ENCODE measurements at regions of chr6 and their contacts with region 1.

Region 1: GRCh38 chr6:99746261-99746895 is 139.7 kb downstream of the PRDM13 start:
- DNase-seq: peak; percentile 70
- H3K4me3 Mint-ChIP-seq: no peak overlapping the region
- H3K27ac Mint-ChIP-seq: no peak overlapping the region
- H3K4me1 Mint-ChIP-seq: no peaks in the 10 kb centered on the region
- H3K27me3 Mint-ChIP-seq: peaks cover 9% of the 10 kb centered on the region
- CTCF ChIP-seq: peak; percentile 72

Region 2: DNA sequence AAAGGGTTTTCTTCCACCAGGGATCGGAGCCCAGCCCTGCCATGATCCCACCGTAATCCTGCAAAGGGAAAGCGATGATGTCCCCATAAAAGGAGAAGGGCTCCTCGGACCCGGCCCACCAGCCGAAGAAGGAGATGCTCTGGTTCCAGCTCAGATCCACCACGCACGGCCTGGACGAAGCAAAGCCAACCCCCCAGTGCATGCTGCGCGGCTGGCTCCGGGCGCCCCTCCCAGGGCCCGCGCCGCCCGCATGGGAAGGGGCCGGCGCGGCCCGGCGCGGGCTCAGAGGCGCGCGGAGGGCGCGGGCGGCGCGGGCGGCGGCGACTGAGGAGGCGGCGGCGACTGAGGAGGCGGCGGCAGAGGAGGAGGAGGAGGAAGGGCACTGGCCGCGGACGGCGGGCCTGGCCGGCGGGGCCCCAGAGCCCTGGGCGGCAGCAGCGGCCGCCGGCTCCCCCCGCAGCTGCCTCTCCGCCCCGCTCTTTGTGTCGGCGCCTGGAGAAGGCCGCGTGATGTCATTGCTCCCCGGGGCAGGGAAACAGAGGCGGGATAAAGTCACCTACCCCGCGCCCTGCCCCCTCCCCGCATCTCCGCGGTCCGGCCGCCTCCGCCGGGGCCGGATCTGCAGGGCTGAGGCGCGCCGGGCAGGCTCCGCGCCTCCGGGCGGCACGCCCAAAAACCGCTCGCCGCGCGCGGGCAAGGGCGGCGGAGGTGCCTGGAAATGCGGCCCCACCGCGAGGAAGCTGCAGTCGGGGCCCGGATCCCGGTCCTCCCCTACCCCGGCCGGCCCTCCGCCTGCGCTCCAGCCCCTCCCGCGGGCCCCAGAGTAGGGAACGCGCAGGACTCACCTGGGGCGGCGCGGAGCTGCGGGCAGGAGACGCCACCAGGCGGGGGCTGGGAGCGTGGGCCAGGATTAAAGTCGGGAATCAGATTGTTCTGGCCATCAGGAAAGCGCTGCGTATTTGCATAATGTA is 396.9 kb before region 1 on chr6 and contains the start of gene FAXC:
- CTCF ChIA-PET with region 1: no interaction called
- intact Hi-C with region 1: loop called (anchors 10 kb)
- DNase-seq: peak; percentile 74
- H3K4me3 Mint-ChIP-seq: peak within 1 kb of the TSS; percentile 63
- H3K27ac Mint-ChIP-seq: no peak within 1 kb of the TSS
- H3K4me1 Mint-ChIP-seq: peaks cover 15% of the 10 kb centered on the region
- H3K27me3 Mint-ChIP-seq: peaks cover 30% of the 10 kb centered on the region
- CTCF ChIP-seq: no peak
- total RNA-seq, gene FAXC: 0.83 and 1.5 TPM in 2 replicates

Region 3: GRCh38 chr6:99467509-99468106 is 278.8 kb before region 1 on chr6:
- CTCF ChIA-PET with region 1: interaction called, 3 read pairs
- intact Hi-C with region 1: loop called (anchors 1 kb)
- DNase-seq: no peak
- H3K4me3 Mint-ChIP-seq: no peak overlapping the region
- H3K27ac Mint-ChIP-seq: no peak overlapping the region
- H3K4me1 Mint-ChIP-seq: no peaks in the 10 kb centered on the region
- H3K27me3 Mint-ChIP-seq: no peaks in the 10 kb centered on the region
- CTCF ChIP-seq: peak; percentile 61

Region 4: DNA sequence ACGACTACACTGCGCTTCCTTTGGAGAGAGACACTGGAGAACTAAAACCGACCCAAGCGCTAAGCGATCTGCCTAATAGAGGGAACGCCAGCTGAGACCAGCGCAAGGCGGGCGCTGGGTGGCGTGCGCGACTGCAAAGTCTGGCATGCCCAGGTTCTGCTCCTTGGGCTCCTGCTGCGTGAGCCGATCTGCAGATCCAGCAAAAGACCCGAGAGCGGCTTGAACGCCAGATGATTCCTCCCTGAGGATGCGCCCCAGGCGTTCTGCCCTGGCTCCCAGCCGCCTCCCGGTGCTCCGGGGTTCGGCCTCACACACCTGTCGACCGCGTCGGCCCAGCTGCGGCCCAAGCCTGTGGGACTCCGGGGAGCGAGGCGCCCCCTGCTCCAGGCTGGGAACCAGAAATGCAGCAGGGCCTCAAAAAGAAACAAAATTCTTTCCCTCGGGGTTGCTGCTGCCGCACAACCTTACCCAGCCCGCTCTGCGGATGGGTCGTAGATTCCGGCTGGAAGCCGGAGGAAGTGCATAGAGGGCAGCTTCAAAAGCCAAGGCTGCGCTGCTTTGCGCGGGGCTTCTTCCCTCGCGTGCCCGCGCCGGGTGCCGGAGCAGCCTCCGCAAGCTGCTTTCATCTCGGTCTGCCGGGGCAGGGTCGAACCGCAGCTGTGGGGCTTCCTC is 157.6 kb before region 1 on chr6:
- CTCF ChIA-PET with region 1: interaction called, 4 read pairs
- intact Hi-C with region 1: loop called (anchors 1 kb)
- DNase-seq: peak; percentile 82
- H3K4me3 Mint-ChIP-seq: peak overlapping the region; percentile 95
- H3K27ac Mint-ChIP-seq: no peak overlapping the region
- H3K4me1 Mint-ChIP-seq: peaks cover 10% of the 10 kb centered on the region
- H3K27me3 Mint-ChIP-seq: peaks cover 49% of the 10 kb centered on the region
- CTCF ChIP-seq: no peak

Measured in Calu3 (cell line).